ENCODE measurements at regions of chr12 and their contacts with region 1.

Region 1: GRCh38 chr12:67804168-67804567 is 155.6 kb downstream of the DYRK2 start:
- DNase-seq: no peak
- H3K4me3 ChIP-seq: no peak overlapping the region
- H3K27ac ChIP-seq: peak overlapping the region in 3 of 4 donors; percentile 71 to 76 (median 73)
- H3K4me1 ChIP-seq: peaks cover 0 to 59% (median 43%) of the 10 kb centered on the region in 4 donors
- H3K27me3 ChIP-seq: no peaks in the 10 kb centered on the region
- CTCF ChIP-seq: no peak
- EP300 ChIP-seq: no peak
- POLR2A ChIP-seq: no peak

Region 2: GRCh38 chr12:67019070-67019469 is 785.1 kb before region 1 on chr12:
- intact Hi-C with region 1: no loop called
- DNase-seq: no peak
- H3K4me3 ChIP-seq: no peak overlapping the region
- H3K27ac ChIP-seq: peak overlapping the region; percentile 22 to 56 (median 46)
- H3K4me1 ChIP-seq: peaks cover 0 to 31% (median 10%) of the 10 kb centered on the region in 4 donors
- H3K27me3 ChIP-seq: no peaks in the 10 kb centered on the region
- CTCF ChIP-seq: no peak
- EP300 ChIP-seq: no peak
- POLR2A ChIP-seq: no peak

Region 3: GRCh38 chr12:67667276-67668073 is 136.7 kb before region 1 on chr12:
- intact Hi-C with region 1: loop called (anchors 5 kb)
- DNase-seq: peak; percentile 92
- H3K4me3 ChIP-seq: no peak overlapping the region
- H3K27ac ChIP-seq: peak overlapping the region; percentile 21 to 81 (median 68)
- H3K4me1 ChIP-seq: peaks cover 0 to 79% (median 49%) of the 10 kb centered on the region in 4 donors
- H3K27me3 ChIP-seq: no peaks in the 10 kb centered on the region
- CTCF ChIP-seq: no peak
- EP300 ChIP-seq: peak in 1 of 4 donors; percentile 25
- POLR2A ChIP-seq: no peak

Measured in sigmoid colon (tissue), 7 donors.